ENCODE measurements at regions of chr3 and their contacts with region 1.

Region 1: GRCh38 chr3:164845739-164846138 is 232.6 kb downstream of the SI start:
- DNase-seq: no peak
- ATAC-seq: no peak
- H3K4me3 ChIP-seq: no peak overlapping the region
- H3K27ac ChIP-seq: no peak overlapping the region
- H3K4me1 ChIP-seq: no peaks in the 10 kb centered on the region
- H3K27me3 ChIP-seq: no peaks in the 10 kb centered on the region
- CTCF ChIP-seq: no peak
- POLR2A ChIP-seq: no peak

Region 2: DNA sequence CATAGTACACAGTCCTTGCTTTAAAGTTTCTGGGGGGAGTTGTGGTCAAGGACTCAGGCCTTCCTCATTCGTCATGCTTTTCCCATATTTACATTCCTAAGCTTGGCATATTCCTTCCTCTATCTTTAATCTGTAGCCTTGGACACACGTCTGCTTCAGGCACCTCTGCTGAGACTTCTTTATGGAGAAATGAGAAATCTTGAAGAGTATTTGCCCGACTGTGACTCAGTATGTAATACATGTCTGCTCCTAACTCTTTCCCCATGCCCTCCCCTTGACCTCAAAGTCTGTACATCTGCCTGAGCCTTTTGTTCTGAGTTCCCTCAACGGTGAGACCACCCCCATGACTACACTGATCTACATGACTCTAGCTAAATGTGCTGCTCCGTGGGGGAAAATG is 13.5 kb before region 1 on chr3:
- intact Hi-C with region 1: loop called in 1 of 10 experiments (anchors 1 kb)
- DNase-seq: no peak
- ATAC-seq: no peak
- H3K4me3 ChIP-seq: no peak overlapping the region
- H3K27ac ChIP-seq: no peak overlapping the region
- H3K4me1 ChIP-seq: no peaks in the 10 kb centered on the region
- H3K27me3 ChIP-seq: no peaks in the 10 kb centered on the region
- CTCF ChIP-seq: no peak
- POLR2A ChIP-seq: no peak